ENCODE measurements at regions of chr1 and their contacts with region 1.

Region 1: GRCh38 chr1:236394905-236395780 is 1.1 kb downstream of the EDARADD start:
- DNase-seq: peak; percentile 48
- H3K4me3 Mint-ChIP-seq: peak overlapping the region; percentile 68
- H3K27ac Mint-ChIP-seq: no peak overlapping the region
- H3K4me1 Mint-ChIP-seq: peaks cover 11% of the 10 kb centered on the region
- H3K27me3 Mint-ChIP-seq: no peaks in the 10 kb centered on the region
- CTCF ChIP-seq: no peak

Region 2: GRCh38 chr1:236345728-236346127 is 49.4 kb before region 1 on chr1:
- CTCF ChIA-PET with region 1: interaction called, 6 read pairs
- POLR2A ChIA-PET with region 1: no interaction called
- intact Hi-C with region 1: loop called (anchors 10 kb)
- DNase-seq: peak; percentile 33
- H3K4me3 Mint-ChIP-seq: no peak overlapping the region
- H3K27ac Mint-ChIP-seq: no peak overlapping the region
- H3K4me1 Mint-ChIP-seq: no peaks in the 10 kb centered on the region
- H3K27me3 Mint-ChIP-seq: no peaks in the 10 kb centered on the region
- CTCF ChIP-seq: no peak

Region 3: DNA sequence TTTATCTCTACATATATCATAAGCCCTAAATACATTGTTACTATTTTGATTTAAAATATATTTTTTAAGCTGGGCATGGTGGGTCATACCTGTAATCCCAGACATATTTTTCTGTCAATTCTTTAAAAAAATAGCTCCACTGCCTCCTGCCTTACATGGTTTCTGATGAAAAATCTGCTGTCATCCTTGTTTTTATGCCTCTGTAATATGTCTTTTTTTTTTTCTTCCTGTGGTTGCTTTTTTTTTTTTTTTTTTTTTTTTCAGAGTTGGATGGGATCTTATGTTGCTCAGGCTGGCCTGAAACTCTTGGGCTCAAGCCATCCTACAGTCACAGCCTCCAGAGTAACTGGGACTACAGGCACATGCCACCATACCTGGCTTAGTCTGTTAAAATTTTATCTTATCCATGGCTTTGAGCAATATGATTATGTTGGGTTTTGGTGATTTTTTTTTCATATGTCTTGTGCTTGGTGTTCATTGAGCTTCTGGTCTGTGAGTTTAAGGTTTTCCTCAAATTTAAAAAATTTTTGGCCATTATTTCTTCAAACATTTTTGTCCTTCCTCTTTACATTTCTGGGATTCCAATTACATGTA is 13.5 kb before region 1 on chr1:
- CTCF ChIA-PET with region 1: interaction called, 8 read pairs
- POLR2A ChIA-PET with region 1: interaction called, 11 read pairs
- intact Hi-C with region 1: no loop called
- DNase-seq: no peak
- H3K4me3 Mint-ChIP-seq: no peak overlapping the region
- H3K27ac Mint-ChIP-seq: no peak overlapping the region
- H3K4me1 Mint-ChIP-seq: no peaks in the 10 kb centered on the region
- H3K27me3 Mint-ChIP-seq: no peaks in the 10 kb centered on the region
- CTCF ChIP-seq: no peak

Measured in MCF 10A (cell line).